Right ventricle myocardium inferior (tissue), 1 donor: ENCODE measurements at regions of chr22 and their contacts with region 1.

Region 1: GRCh38 chr22:24525416-24526037 is 29.4 kb downstream of the GUCD1 start:
- DNase-seq: peak; percentile 82
- ATAC-seq: peak; percentile 82

Region 2: DNA sequence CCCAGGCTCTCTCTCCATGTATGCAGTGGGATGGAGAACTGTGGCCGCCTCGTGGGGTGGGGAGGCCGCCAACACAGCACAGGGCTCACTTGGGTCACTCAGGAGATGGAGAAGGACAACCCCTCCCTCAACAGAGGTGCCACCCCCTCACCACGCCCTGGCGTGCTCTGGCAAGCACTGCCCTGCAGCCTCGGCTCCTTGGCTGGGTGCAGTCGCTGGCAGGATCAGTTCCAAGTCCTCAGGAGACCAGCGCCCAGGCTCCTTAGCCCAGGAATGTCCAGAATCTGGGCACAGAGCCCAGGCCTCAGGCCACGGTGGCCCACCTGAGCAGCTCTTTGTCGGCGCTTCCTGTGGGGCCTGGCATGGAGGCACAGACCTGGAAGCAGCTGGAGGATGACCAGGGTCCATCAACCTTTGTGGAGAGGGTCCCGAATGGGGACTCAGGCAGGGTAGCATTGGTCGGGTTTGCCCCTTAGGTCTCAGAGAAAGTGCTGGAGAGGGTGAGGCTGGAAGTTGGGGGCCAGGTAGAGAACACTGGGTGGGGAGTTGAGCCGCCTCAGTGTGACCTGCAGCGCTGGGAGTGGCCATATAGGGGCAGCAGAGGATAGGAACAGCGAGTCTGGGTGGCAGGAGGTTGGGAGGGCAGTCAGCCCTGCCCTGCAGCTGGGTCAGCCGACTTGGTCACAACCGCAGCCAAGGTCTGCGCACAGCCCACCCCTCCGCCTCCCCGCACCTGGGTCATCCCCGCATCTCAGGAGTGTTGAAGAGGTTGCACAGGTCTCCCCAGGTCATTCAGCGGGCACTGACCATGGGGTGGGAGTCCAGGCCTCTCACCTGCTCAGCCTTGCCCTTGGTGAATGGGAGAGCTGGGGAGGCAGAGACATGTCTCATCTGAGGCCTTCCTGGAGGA is 336.0 kb before region 1 on chr22:
- intact Hi-C with region 1: loop called (anchors 5 kb)
- DNase-seq: peak; percentile 83
- ATAC-seq: peak; percentile 88

Region 3: GRCh38 chr22:24333301-24333700 is 192.2 kb before region 1 on chr22:
- intact Hi-C with region 1: loop called (anchors 5 kb)
- DNase-seq: no peak
- ATAC-seq: no peak

Region 4: GRCh38 chr22:24474221-24474620 is 51.3 kb before region 1 on chr22:
- intact Hi-C with region 1: no loop called
- DNase-seq: no peak
- ATAC-seq: no peak